ENCODE measurements at regions of chr14 and their contacts with region 1.

Region 1: DNA sequence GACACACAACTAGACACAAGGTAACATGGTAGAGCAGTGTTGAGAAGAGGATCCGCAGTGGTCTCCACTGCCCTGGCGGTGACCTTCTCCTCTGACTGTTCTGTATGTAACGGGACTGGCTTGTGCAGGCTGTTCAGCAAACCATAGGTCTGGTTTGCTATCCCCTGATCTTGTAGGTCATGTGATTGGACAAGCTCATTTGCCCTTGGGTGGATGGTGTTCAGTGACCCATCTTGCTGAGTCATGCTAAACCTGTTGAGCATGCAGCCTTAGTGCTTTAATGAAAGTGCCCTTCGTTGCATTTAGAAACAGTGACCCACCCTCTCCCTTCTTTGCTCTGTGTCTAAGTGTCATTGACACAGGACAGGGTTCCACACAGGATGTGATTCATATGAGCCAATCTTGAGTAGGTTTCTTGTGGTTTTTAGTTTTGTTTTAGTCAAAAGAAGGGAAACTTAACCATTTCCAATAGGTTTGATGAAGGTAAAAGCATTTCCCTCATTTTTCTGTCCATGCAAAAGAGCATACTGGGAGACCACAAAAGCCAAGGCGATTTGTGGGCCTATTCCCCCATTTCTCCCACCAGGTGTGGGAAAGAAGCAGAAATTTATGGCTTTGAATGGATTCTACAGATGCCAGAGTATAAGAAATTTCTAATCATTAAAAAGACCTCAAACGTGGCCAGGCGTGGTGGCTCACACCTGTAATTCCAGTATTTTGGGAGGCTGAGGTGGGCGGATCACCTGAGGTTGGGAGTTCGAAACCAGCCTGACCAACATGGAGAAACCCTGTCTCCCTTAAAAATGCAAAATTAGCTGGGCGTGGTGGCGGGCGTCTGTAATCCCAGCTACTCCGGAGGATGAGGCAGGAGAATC is 32.6 kb upstream of the HIF1A start:
- DNase-seq: peak; percentile 90 to 94 (median 92)
- H3K4me3 ChIP-seq: peak overlapping the region; percentile 12 to 60 (median 25)
- H3K4me3 Mint-ChIP-seq: peak overlapping the region; percentile 51 to 55
- H3K27ac ChIP-seq: peak overlapping the region; percentile 80 to 87
- H3K27ac Mint-ChIP-seq: peak overlapping the region; percentile 92 to 98 (median 96)
- H3K4me1 ChIP-seq: peaks cover 55 to 68% of the 10 kb centered on the region in 2 donors
- H3K4me1 Mint-ChIP-seq: peaks cover 61% of the 10 kb centered on the region
- H3K27me3 ChIP-seq: no peaks in the 10 kb centered on the region
- H3K27me3 Mint-ChIP-seq: no peaks in the 10 kb centered on the region
- CTCF ChIP-seq: no peak

Region 2: DNA sequence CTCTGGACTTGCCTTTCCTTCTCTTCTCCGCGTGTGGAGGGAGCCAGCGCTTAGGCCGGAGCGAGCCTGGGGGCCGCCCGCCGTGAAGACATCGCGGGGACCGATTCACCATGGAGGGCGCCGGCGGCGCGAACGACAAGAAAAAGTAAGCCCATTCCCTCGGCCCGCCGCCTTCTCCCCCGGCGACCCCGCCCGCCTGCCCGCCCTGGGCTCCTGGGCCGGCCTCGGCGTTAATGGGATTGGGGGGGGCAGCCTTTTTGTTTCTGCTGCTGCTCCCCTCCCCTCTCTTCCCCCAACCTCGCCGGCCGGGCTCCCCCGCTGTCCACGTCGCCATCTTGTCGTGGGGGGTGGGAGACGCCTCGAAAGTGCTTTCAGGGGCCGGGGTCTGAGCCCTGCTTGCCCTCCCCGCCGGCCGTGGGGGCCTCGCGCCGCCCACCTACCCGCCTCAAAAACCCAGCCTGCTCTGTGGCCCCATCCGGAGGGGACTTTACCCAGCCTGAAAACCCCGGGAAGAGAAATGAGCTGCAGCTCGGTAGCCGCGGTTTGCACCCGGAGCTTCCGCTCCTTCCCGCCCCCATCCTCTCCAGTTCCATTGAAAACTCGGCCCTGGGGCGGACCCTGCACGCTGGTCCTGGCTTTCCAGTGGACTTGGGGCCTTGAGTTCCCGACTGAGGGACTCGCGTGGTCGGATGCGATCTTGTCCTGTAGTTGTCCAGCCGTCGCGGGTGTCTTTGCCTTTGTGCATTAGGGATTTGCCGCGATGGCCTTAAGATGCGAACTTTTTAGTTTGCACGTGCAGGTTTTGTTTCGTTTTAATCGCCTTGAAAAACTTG is 33.2 kb after region 1 on chr14:
- intact Hi-C with region 1: loop called in 1 of 2 experiments (anchors 2 kb)
- DNase-seq: peak; percentile 15 to 49 (median 35)
- H3K4me3 ChIP-seq: peak overlapping the region; percentile 68 to 99 (median 89)
- H3K4me3 Mint-ChIP-seq: peak overlapping the region; percentile 95 to 97
- H3K27ac ChIP-seq: peak overlapping the region; percentile 90 to 98
- H3K27ac Mint-ChIP-seq: peak overlapping the region; percentile 94 to 98 (median 97)
- H3K4me1 ChIP-seq: peaks cover 19 to 45% of the 10 kb centered on the region in 2 donors
- H3K4me1 Mint-ChIP-seq: peaks cover 21% of the 10 kb centered on the region
- H3K27me3 ChIP-seq: no peaks in the 10 kb centered on the region
- H3K27me3 Mint-ChIP-seq: peaks cover 0 to 3% (median 1%) of the 10 kb centered on the region in 3 donors
- CTCF ChIP-seq: no peak

Region 3: GRCh38 chr14:62711351-62712023 is 1048.8 kb after region 1 on chr14:
- intact Hi-C with region 1: no loop called
- DNase-seq: no peak
- H3K4me3 ChIP-seq: no peak overlapping the region
- H3K4me3 Mint-ChIP-seq: no peak overlapping the region
- H3K27ac ChIP-seq: no peak overlapping the region
- H3K27ac Mint-ChIP-seq: no peak overlapping the region
- H3K4me1 ChIP-seq: no peaks in the 10 kb centered on the region
- H3K4me1 Mint-ChIP-seq: no peaks in the 10 kb centered on the region
- H3K27me3 ChIP-seq: no peaks in the 10 kb centered on the region
- H3K27me3 Mint-ChIP-seq: no peaks in the 10 kb centered on the region
- CTCF ChIP-seq: no peak